ENCODE measurements at regions of chr1 and their contacts with region 1.

Region 1: GRCh38 chr1:226814751-226815496 is 55.5 kb upstream of the PSEN2 start:
- DNase-seq: peak; percentile 100
- H3K4me3 Mint-ChIP-seq: no peak overlapping the region
- H3K27ac Mint-ChIP-seq: peak overlapping the region; percentile 89
- H3K4me1 Mint-ChIP-seq: peaks cover 18% of the 10 kb centered on the region
- H3K27me3 Mint-ChIP-seq: no peaks in the 10 kb centered on the region
- CTCF ChIP-seq: no peak

Region 2: DNA sequence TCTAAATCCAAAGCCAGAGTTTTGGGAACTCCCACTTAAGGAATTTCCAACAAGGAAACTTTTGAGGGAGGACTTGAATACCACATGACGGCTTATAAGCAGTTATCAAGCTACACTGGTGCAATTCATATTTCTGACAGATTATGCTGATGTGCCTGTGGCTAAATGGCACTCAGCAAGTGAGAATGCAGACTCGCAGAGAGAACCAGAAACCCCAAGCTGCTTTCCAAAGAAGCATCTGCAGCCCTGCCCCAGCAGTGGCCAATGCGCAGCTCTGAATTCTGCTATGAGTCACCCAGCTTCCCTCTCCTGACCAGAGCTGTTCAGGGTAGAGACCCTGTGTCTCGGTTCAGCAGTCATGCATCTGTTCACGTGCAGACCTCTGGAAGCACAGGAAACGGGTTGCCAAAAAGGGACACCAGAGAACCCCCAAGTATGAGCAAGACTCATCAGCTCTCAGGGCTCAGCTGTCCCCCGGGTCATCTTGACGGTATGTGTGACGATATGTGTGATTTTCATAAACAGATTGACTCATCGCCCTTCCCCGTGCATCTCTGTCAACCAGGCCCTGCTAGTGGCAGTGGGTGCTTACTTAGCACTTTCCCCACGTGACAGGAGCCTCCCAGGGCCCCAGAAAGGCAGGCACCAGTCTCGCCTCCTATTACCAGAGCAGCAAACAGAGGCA is 152.1 kb before region 1 on chr1:
- CTCF ChIA-PET with region 1: interaction called, 4 read pairs
- POLR2A ChIA-PET with region 1: interaction called, 33 read pairs
- intact Hi-C with region 1: no loop called
- DNase-seq: peak; percentile 95
- H3K4me3 Mint-ChIP-seq: peak overlapping the region; percentile 65
- H3K27ac Mint-ChIP-seq: peak overlapping the region; percentile 96
- H3K4me1 Mint-ChIP-seq: peaks cover 33% of the 10 kb centered on the region
- H3K27me3 Mint-ChIP-seq: no peaks in the 10 kb centered on the region
- CTCF ChIP-seq: no peak

Region 3: GRCh38 chr1:226708342-226708780 is 106.6 kb before region 1 on chr1:
- CTCF ChIA-PET with region 1: interaction called, 3 read pairs
- POLR2A ChIA-PET with region 1: interaction called, 22 read pairs
- intact Hi-C with region 1: no loop called
- DNase-seq: peak; percentile 93
- H3K4me3 Mint-ChIP-seq: peak overlapping the region; percentile 19
- H3K27ac Mint-ChIP-seq: peak overlapping the region; percentile 91
- H3K4me1 Mint-ChIP-seq: peaks cover 29% of the 10 kb centered on the region
- H3K27me3 Mint-ChIP-seq: no peaks in the 10 kb centered on the region
- CTCF ChIP-seq: no peak

Region 4: GRCh38 chr1:226778657-226779058 is 36.3 kb before region 1 on chr1:
- CTCF ChIA-PET with region 1: interaction called, 4 read pairs
- POLR2A ChIA-PET with region 1: interaction called, 69 read pairs
- intact Hi-C with region 1: loop called (anchors 2 kb)
- DNase-seq: peak; percentile 99
- H3K4me3 Mint-ChIP-seq: no peak overlapping the region
- H3K27ac Mint-ChIP-seq: peak overlapping the region; percentile 65
- H3K4me1 Mint-ChIP-seq: peaks cover 16% of the 10 kb centered on the region
- H3K27me3 Mint-ChIP-seq: no peaks in the 10 kb centered on the region
- CTCF ChIP-seq: no peak

Region 5: GRCh38 chr1:226827968-226828513 is 13.1 kb after region 1 on chr1:
- CTCF ChIA-PET with region 1: interaction called, 44 read pairs
- POLR2A ChIA-PET with region 1: interaction called, 11 read pairs
- intact Hi-C with region 1: no loop called
- DNase-seq: peak; percentile 100
- H3K4me3 Mint-ChIP-seq: no peak overlapping the region
- H3K27ac Mint-ChIP-seq: no peak overlapping the region
- H3K4me1 Mint-ChIP-seq: no peaks in the 10 kb centered on the region
- H3K27me3 Mint-ChIP-seq: no peaks in the 10 kb centered on the region
- CTCF ChIP-seq: peak; percentile 100